Calu3 (cell line): ENCODE measurements at regions of chr2 and their contacts with region 1.

Region 1: GRCh38 chr2:26605195-26605998 is 35.8 kb downstream of the CIB4 start:
- DNase-seq: peak; percentile 66
- H3K4me3 Mint-ChIP-seq: no peak overlapping the region
- H3K27ac Mint-ChIP-seq: no peak overlapping the region
- H3K4me1 Mint-ChIP-seq: peaks cover 42% of the 10 kb centered on the region
- H3K27me3 Mint-ChIP-seq: peaks cover 35% of the 10 kb centered on the region
- CTCF ChIP-seq: peak; percentile 85

Region 2: GRCh38 chr2:26382564-26382963 is 222.8 kb before region 1 on chr2:
- CTCF ChIA-PET with region 1: no interaction called
- intact Hi-C with region 1: no loop called
- DNase-seq: no peak
- H3K4me3 Mint-ChIP-seq: no peak overlapping the region
- H3K27ac Mint-ChIP-seq: peak overlapping the region; percentile 52
- H3K4me1 Mint-ChIP-seq: no peaks in the 10 kb centered on the region
- H3K27me3 Mint-ChIP-seq: no peaks in the 10 kb centered on the region
- CTCF ChIP-seq: no peak

Region 3: DNA sequence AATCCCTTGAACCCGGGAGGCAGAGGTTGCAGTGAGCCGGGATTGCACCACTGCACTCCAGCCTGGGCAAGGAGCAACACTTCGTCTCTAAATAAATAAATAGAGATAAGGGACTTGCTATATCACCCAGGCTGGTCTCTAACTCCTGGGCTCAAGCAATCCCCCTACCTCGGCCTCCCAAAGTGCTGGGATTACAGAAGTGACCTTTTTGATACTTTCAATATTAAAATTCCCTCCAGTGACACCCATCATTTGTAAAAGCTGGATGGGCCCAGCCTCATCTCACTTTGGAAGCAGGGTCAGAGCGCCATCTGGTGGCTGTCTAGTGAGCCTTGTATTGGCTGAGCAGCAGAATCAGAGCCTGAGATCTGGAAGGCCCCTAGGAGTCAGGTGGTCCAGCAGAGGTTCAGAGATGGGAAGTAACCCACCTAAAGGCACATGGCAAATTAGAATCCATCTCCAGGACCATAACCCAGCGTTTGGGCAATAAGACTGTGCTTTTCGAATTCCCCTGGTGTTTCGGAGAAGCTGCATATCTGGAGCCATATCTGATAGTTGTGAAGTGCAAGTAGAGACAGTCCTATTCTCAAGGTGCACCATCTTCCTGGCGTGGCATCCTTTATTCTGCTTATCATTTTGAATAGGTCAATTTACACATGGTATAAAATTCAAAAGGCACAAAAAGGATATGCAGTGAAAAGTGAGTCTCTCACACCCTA is 140.4 kb after region 1 on chr2:
- CTCF ChIA-PET with region 1: interaction called, 16 read pairs
- intact Hi-C with region 1: loop called (anchors 1 kb)
- DNase-seq: peak; percentile 85
- H3K4me3 Mint-ChIP-seq: no peak overlapping the region
- H3K27ac Mint-ChIP-seq: no peak overlapping the region
- H3K4me1 Mint-ChIP-seq: peaks cover 11% of the 10 kb centered on the region
- H3K27me3 Mint-ChIP-seq: peaks cover 14% of the 10 kb centered on the region
- CTCF ChIP-seq: peak; percentile 91

Region 4: DNA sequence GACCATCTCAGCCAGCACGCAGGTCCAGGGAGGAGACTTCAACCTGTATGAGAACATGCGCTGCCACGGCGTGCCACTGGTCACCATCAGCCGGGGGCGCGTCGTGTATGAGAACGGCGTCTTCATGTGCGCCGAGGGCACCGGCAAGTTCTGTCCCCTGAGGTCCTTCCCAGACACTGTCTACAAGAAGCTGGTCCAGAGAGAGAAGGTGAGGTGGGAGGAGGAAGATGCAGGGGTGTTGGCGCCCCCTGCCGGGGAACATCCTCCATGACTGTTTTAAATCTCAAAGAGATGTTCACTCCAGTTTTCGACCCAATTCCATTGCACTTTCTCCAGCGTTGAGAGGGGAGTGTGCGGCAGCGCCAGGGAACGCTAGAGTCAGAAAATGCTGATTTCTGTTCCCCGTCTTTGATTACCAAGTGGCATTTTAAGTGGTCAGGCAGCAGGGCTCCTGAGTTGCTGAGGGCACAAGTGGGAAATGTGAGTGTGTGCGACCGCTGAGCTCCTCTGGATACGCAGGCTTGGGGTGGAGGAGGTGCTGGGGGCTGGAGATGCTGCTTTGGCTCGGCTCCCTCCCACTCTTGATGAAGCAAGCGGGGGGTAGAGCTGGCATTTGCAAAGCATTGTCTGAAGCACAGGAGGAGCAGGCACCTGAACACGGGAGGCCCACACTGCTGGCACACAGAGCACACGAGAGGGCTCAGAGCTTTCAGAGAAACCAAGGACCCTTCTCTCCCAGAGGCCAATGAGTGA is 337.3 kb after region 1 on chr2:
- CTCF ChIA-PET with region 1: no interaction called
- intact Hi-C with region 1: loop called (anchors 10 kb)
- DNase-seq: peak; percentile 69
- H3K4me3 Mint-ChIP-seq: no peak overlapping the region
- H3K27ac Mint-ChIP-seq: no peak overlapping the region
- H3K4me1 Mint-ChIP-seq: no peaks in the 10 kb centered on the region
- H3K27me3 Mint-ChIP-seq: peaks cover 74% of the 10 kb centered on the region
- CTCF ChIP-seq: peak; percentile 76